CD4-positive, alpha-beta memory T cell (primary cell): ENCODE measurements at regions of chr2 and their contacts with region 1.

Region 1: DNA sequence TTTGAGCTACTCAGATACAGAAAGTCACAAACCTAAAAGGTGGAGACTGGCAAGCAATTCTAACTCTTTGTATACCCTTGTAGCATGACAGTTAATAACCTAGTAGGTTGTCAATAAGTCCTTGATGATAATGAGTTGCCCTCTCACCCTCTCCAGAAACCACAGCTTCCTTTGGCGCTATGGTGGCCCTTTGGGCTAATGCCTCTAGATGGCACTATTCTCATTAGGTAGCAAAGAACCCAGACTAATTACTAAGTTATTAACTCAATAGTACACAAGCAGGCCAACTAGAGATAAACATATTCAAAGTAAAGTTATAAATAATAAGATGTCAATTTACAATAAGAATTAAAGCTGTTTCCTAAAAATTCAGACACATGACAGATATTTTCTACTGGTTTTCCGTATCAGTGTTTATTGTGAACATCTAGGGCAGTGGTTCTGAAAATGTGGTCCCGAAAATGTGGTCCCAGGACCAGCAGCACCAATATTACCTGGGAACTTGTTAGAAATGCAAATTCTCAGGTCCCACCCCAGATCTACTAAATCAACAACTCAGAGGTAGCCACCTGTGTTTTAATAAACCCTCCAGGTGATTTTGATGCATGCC is 41.1 kb downstream of the LDAH start:
- DNase-seq: peak in 3 of 5 donors; percentile 17 to 29 (median 29)
- H3K4me3 ChIP-seq: no peak overlapping the region
- H3K4me3 Mint-ChIP-seq: no peak overlapping the region
- H3K27ac ChIP-seq: no peak overlapping the region
- H3K27ac Mint-ChIP-seq: no peak overlapping the region
- H3K4me1 ChIP-seq: no peaks in the 10 kb centered on the region
- H3K4me1 Mint-ChIP-seq: peaks cover 0 to 7% (median under 1%) of the 10 kb centered on the region in 4 donors
- H3K27me3 ChIP-seq: no peaks in the 10 kb centered on the region
- H3K27me3 Mint-ChIP-seq: no peaks in the 10 kb centered on the region

Region 2: GRCh38 chr2:20758997-20759396 is 22.8 kb before region 1 on chr2:
- CTCF ChIA-PET with region 1: interaction called, 14 read pairs
- POLR2A ChIA-PET with region 1: no interaction called
- intact Hi-C with region 1: no loop called
- DNase-seq: no peak
- H3K4me3 ChIP-seq: no peak overlapping the region
- H3K4me3 Mint-ChIP-seq: no peak overlapping the region
- H3K27ac ChIP-seq: no peak overlapping the region
- H3K27ac Mint-ChIP-seq: peak overlapping the region in 1 of 7 donors; percentile 30
- H3K4me1 ChIP-seq: no peaks in the 10 kb centered on the region
- H3K4me1 Mint-ChIP-seq: peaks cover 0 to 10% (median 5%) of the 10 kb centered on the region in 4 donors
- H3K27me3 ChIP-seq: no peaks in the 10 kb centered on the region
- H3K27me3 Mint-ChIP-seq: no peaks in the 10 kb centered on the region

Region 3: GRCh38 chr2:20796374-20796791 is 14.6 kb after region 1 on chr2:
- CTCF ChIA-PET with region 1: interaction called, 14 read pairs
- POLR2A ChIA-PET with region 1: no interaction called
- intact Hi-C with region 1: no loop called
- DNase-seq: no peak
- H3K4me3 ChIP-seq: no peak overlapping the region
- H3K4me3 Mint-ChIP-seq: no peak overlapping the region
- H3K27ac ChIP-seq: no peak overlapping the region
- H3K27ac Mint-ChIP-seq: peak overlapping the region in 1 of 7 donors; percentile 51
- H3K4me1 ChIP-seq: no peaks in the 10 kb centered on the region
- H3K4me1 Mint-ChIP-seq: peaks cover 4 to 24% (median 17%) of the 10 kb centered on the region in 4 donors
- H3K27me3 ChIP-seq: no peaks in the 10 kb centered on the region
- H3K27me3 Mint-ChIP-seq: no peaks in the 10 kb centered on the region

Region 4: GRCh38 chr2:20953145-20953824 is 171.5 kb after region 1 on chr2:
- CTCF ChIA-PET with region 1: interaction called, 13 read pairs
- POLR2A ChIA-PET with region 1: no interaction called
- intact Hi-C with region 1: no loop called
- DNase-seq: no peak
- H3K4me3 ChIP-seq: no peak overlapping the region
- H3K4me3 Mint-ChIP-seq: no peak overlapping the region
- H3K27ac ChIP-seq: no peak overlapping the region
- H3K27ac Mint-ChIP-seq: no peak overlapping the region
- H3K4me1 ChIP-seq: no peaks in the 10 kb centered on the region
- H3K4me1 Mint-ChIP-seq: no peaks in the 10 kb centered on the region
- H3K27me3 ChIP-seq: no peaks in the 10 kb centered on the region
- H3K27me3 Mint-ChIP-seq: peaks cover 4 to 8% of the 10 kb centered on the region in 2 donors

Region 5: GRCh38 chr2:20962939-20963557 is 181.3 kb after region 1 on chr2:
- CTCF ChIA-PET with region 1: interaction called, 113 read pairs
- POLR2A ChIA-PET with region 1: no interaction called
- intact Hi-C with region 1: loop called (anchors 1 kb)
- DNase-seq: peak; percentile 47 to 55 (median 53)
- H3K4me3 ChIP-seq: no peak overlapping the region
- H3K4me3 Mint-ChIP-seq: no peak overlapping the region
- H3K27ac ChIP-seq: no peak overlapping the region
- H3K27ac Mint-ChIP-seq: no peak overlapping the region
- H3K4me1 ChIP-seq: no peaks in the 10 kb centered on the region
- H3K4me1 Mint-ChIP-seq: no peaks in the 10 kb centered on the region
- H3K27me3 ChIP-seq: no peaks in the 10 kb centered on the region
- H3K27me3 Mint-ChIP-seq: peaks cover 9 to 29% of the 10 kb centered on the region in 2 donors